HepG2 (cell line): ENCODE measurements at regions of chr7 and their contacts with region 1.

Region 1: GRCh38 chr7:99631295-99632109 is 14.8 kb downstream of the ZSCAN25 start:
- DNase-seq: peak; percentile 64
- ATAC-seq: peak; percentile 89
- H3K4me3 ChIP-seq: no peak overlapping the region
- H3K27ac ChIP-seq: peak overlapping the region; percentile 10
- H3K4me1 ChIP-seq: peaks cover 24% of the 10 kb centered on the region
- H3K27me3 ChIP-seq: no peaks in the 10 kb centered on the region
- CTCF ChIP-seq: peak; percentile 86
- EP300 ChIP-seq: 0 out of 4 replicates have a peak, but pooled peaks of 1 of the 2 experiments have one; percentile 17
- POLR2A ChIP-seq: no peak
- RAD21 ChIP-seq: peak; percentile 90

Region 2: DNA sequence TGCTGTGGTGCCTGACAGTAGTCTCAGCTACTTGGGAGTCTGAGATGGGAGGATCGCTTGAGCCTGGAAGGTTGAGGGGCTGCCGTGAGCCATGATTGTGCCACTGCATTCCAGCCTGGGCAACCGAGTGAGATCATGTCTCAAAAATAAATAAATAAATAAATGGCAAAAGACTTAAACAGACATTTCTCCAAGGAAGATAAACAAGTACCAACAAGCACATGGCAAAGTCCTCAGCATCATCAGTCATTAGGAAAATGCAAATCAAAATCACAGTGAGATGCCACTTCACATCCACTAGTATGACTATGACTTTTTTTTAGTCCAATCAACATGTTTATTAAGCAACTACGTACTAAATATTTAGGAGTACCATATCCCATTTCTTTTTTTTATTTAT is 402.3 kb before region 1 on chr7:
- CTCF ChIA-PET with region 1: no interaction called
- POLR2A ChIA-PET with region 1: no interaction called
- in situ Hi-C with region 1: no loop called
- intact Hi-C with region 1: no loop called
- DNase-seq: no peak
- ATAC-seq: no peak
- H3K4me3 ChIP-seq: no peak overlapping the region
- H3K27ac ChIP-seq: no peak overlapping the region
- H3K4me1 ChIP-seq: peaks cover 32% of the 10 kb centered on the region
- H3K27me3 ChIP-seq: no peaks in the 10 kb centered on the region
- CTCF ChIP-seq: no peak
- EP300 ChIP-seq: no peak
- POLR2A ChIP-seq: no peak
- RAD21 ChIP-seq: no peak

Region 3: DNA sequence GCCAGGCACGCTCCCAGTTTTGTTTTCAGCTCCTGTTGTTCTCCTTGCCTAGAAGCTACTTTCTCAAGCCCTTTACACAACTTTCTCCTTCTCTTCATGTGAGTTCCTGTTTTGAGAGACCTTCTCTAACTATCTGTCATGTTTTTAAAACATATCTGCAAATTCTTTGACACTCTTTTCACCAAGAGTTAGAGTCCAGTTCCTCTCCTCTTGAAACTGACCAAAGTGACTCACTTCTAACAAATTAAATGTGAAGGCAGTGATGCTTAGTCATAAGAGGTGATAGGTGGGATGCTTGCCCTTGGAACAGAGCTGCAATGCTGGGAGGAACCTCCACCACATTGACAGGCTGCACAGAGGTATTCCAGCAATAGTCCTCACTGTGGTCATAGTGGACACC is 10.5 kb after region 1 on chr7:
- CTCF ChIA-PET with region 1: no interaction called
- POLR2A ChIA-PET with region 1: no interaction called
- in situ Hi-C with region 1: no loop called
- intact Hi-C with region 1: no loop called
- DNase-seq: no peak
- ATAC-seq: no peak
- H3K4me3 ChIP-seq: no peak overlapping the region
- H3K27ac ChIP-seq: no peak overlapping the region
- H3K4me1 ChIP-seq: no peaks in the 10 kb centered on the region
- H3K27me3 ChIP-seq: no peaks in the 10 kb centered on the region
- CTCF ChIP-seq: no peak
- EP300 ChIP-seq: no peak
- POLR2A ChIP-seq: no peak
- RAD21 ChIP-seq: no peak

Region 4: GRCh38 chr7:99733448-99733847 is 101.9 kb after region 1 on chr7:
- CTCF ChIA-PET with region 1: no interaction called
- POLR2A ChIA-PET with region 1: no interaction called
- in situ Hi-C with region 1: no loop called
- intact Hi-C with region 1: loop called (anchors 5 kb)
- DNase-seq: peak; percentile 42
- ATAC-seq: peak; percentile 49
- H3K4me3 ChIP-seq: no peak overlapping the region
- H3K27ac ChIP-seq: peak overlapping the region; percentile 50
- H3K4me1 ChIP-seq: peaks cover 81% of the 10 kb centered on the region
- H3K27me3 ChIP-seq: no peaks in the 10 kb centered on the region
- CTCF ChIP-seq: peak; percentile 63
- EP300 ChIP-seq: no peak
- POLR2A ChIP-seq: no peak
- RAD21 ChIP-seq: no peak

Region 5: DNA sequence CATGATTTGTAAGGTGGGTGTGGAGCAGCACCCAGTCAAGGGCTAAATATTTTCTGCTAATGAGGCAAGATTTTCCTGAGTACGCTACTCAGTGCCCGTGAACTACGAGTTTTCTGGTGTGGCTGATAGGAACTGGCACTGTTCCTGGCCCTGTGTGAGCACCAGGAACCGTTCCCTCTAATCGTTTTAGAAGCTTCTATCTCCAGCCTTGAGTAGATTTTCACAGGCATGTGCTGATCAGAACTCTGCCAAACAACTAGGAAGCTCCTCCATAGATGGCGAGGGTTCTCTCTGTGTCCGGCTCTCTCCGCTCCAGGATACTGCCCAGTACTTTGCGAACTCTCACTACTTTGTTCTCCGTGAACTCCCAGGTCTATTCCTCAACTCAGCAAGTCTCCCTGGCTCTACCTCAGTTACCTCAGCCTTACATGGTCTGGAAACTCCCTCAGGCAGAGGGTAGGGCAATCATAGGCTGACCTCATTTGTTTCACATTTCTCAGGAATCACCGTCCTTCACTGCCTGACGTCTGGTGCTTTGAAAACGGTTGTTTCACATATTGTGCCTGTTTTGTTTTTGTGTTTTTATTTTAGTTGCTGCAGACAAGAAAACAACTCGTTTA is 270.2 kb after region 1 on chr7:
- CTCF ChIA-PET with region 1: no interaction called
- POLR2A ChIA-PET with region 1: no interaction called
- in situ Hi-C with region 1: loop called (anchors 10 kb)
- intact Hi-C with region 1: no loop called
- DNase-seq: no peak
- ATAC-seq: no peak
- H3K4me3 ChIP-seq: no peak overlapping the region
- H3K27ac ChIP-seq: no peak overlapping the region
- H3K4me1 ChIP-seq: no peaks in the 10 kb centered on the region
- H3K27me3 ChIP-seq: no peaks in the 10 kb centered on the region
- CTCF ChIP-seq: no peak
- EP300 ChIP-seq: no peak
- POLR2A ChIP-seq: no peak
- RAD21 ChIP-seq: no peak

Region 6: DNA sequence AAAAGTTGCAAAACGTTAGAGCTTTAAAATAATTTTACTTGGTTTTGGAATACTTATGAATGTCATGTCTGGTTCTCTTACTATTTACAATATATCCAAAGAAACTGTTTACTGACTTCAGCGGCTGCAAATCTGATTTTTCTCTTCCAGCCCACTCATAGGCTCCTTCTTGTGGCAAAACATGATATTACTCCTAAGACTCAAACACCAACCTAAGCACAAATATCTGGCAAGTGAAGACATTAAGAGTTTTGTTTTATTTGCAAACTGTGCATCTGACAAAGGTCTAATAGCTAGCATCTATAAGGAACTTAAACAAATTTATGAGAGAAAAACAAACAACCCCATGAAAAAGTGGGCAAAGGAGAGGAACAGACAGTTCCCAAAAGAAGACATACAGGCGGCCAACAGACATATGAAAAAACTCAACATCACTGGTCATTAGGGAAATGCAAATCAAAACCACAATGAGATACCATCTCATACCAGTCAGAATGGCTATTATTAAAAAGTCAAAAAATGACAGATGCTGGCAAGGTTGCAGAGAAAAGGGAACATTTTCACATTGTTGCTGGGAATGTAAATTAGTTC is 318.2 kb after region 1 on chr7:
- CTCF ChIA-PET with region 1: no interaction called
- POLR2A ChIA-PET with region 1: no interaction called
- in situ Hi-C with region 1: no loop called
- intact Hi-C with region 1: loop called (anchors 1 kb)
- DNase-seq: peak; percentile 21
- ATAC-seq: no peak
- H3K4me3 ChIP-seq: no peak overlapping the region
- H3K27ac ChIP-seq: no peak overlapping the region
- H3K4me1 ChIP-seq: peaks cover 7% of the 10 kb centered on the region; the same call in 1 of the 2 replicates
- H3K27me3 ChIP-seq: no peaks in the 10 kb centered on the region
- CTCF ChIP-seq: peak; percentile 47
- EP300 ChIP-seq: no peak
- POLR2A ChIP-seq: no peak
- RAD21 ChIP-seq: no peak